Uterus (tissue), 4 donors: ENCODE measurements at regions of chr17 and their contacts with region 1.

Region 1: DNA sequence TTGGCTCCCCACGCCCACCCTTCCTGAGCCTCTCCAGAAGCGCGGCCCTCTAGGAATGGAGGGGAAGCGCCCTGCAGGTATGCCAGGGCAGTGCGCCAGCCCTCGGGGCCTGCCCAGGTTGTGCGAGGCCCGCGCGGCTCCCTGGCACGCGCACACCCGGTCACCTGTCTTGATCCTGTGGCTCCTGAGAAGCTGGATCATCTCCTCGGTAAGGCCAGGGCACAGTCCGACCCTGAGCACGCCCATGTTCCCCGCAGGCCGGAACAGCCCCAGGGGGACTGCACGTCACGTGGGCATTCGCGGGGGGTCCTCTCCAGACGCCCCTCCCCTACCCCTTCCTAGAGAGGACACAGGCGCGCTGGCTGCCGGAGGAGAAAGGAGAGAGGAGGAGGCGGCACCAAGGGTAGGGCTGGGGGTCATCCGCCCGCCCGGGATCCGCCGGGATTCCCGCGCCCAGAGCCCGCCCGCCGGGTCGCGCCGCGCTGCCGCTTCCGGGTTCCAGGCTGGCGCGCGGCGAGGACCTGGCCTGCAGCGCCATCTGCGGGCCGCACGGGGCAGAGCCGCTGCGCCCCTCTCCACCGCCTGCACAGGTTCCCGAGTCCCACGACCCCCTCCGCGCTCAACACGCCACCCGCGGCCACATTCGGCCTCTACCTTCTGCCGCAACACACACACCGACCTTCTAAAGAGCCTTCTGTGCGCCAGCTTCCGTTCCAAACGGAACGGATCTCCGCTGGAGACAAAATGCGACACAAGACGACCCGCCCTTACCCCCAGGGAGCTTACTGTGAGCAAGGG is at the start of gene RAD51D:
- DNase-seq: peak; percentile 62 to 75
- H3K4me3 ChIP-seq: peak within 1 kb of the TSS; percentile 51 to 85
- H3K27ac ChIP-seq: peak within 1 kb of the TSS; percentile 66 to 76
- H3K4me1 ChIP-seq: no peaks in the 10 kb centered on the region
- H3K27me3 ChIP-seq: no peaks in the 10 kb centered on the region
- CTCF ChIP-seq: peak; percentile 72 to 99 (median 96)
- POLR2A ChIP-seq: peak in 1 of 2 donors; percentile 24
- total RNA-seq, gene RAD51D: 0.29 to 17.4 (median 7.6) TPM

Region 2: GRCh38 chr17:34420254-34420766 is 699.3 kb before region 1 on chr17:
- intact Hi-C with region 1: loop called (anchors 10 kb)
- DNase-seq: peak; percentile 52 to 53
- H3K4me3 ChIP-seq: no peak overlapping the region
- H3K27ac ChIP-seq: no peak overlapping the region
- H3K4me1 ChIP-seq: no peaks in the 10 kb centered on the region
- H3K27me3 ChIP-seq: peaks cover 0 to 11% of the 10 kb centered on the region in 2 donors
- CTCF ChIP-seq: peak; percentile 82 to 89 (median 86)
- POLR2A ChIP-seq: no peak

Region 3: DNA sequence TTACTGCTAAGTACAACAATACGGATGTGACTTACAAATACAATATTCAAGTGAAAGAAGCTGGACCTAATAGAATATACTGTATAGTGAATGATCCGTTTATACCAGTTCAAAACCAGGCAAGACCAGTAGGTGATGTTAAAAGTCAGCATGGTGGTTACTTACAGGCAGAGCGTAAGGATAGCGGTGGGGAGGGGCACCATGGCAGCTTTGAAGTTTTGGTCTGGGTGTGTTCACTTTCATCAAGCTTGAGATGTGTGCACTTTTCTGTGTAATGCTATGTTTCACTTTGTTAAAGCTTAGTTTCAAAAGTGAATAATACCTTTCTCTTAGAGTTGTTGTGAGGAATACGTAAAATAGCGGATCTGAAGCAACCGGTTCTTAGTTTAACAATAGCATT is 91.2 kb after region 1 on chr17:
- intact Hi-C with region 1: no loop called
- DNase-seq: no peak
- H3K4me3 ChIP-seq: no peak overlapping the region
- H3K27ac ChIP-seq: no peak overlapping the region
- H3K4me1 ChIP-seq: no peaks in the 10 kb centered on the region
- H3K27me3 ChIP-seq: no peaks in the 10 kb centered on the region
- CTCF ChIP-seq: no peak
- POLR2A ChIP-seq: no peak